Activated CD4-positive, alpha-beta memory T cell treated with anti-CD3 and anti-CD28 coated beads, Interleukin-2, amount 10 ng/mL, durations not matched to agents 7 days and 5 days (primary cell): ENCODE measurements at regions of chr7 and their contacts with region 1.

Region 1: GRCh38 chr7:103344453-103345149 is at the start of gene DNAJC2:
- DNase-seq: peak; percentile 87
- H3K4me3 Mint-ChIP-seq: peak within 1 kb of the TSS; percentile 100
- H3K27ac Mint-ChIP-seq: peak within 1 kb of the TSS; percentile 98
- H3K4me1 Mint-ChIP-seq: peaks cover 62% of the 10 kb centered on the region
- H3K27me3 Mint-ChIP-seq: no peaks in the 10 kb centered on the region
- total RNA-seq, gene DNAJC2: 24.8 to 26.2 TPM

Region 2: DNA sequence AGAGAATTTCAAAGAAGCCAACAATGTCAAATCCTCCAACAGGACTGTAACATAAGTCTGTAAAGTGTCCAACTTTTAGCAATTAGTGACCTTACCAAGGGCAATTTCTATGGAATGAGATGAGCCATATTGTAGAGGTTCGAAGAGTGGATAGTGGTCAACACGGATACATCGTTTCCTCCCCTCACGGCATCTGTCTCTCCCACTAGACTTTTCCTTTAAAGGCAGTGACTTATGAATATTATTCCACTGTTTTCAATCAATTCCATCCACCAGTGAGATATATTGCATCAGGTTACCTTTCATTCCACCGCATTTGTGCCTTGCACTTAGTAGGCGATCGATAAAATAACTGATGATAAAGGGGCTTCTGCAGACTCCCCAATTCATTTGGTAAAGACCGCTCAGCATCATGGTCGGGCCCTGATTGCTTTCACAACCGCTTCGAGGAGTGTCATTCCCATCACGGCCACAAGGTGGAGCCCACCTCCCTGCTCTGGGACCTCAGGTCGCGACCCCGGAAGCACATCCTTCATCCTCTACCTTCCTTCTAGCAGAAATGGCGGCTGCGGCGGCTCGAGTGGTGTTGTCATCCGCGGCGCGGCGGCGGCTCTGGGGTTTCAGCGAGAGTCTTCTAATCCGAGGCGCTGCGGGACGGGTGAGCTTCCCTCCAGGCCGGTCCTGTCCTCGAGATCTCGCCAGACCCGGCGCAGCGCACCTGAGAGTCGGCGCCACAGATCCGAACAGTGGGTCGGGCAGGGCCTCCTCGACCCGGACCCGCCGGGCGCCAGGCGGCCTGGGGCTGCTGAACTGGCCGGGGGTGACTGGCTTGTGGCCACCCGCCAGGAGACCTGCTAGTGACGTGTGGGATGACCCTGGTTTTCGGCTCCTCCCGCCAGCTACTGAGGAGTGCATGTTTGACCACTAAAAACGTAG is 47.4 kb before region 1 on chr7 and contains the start of gene PMPCB:
- CTCF ChIA-PET with region 1: interaction called, 3 read pairs
- POLR2A ChIA-PET with region 1: interaction called, 12 read pairs
- DNase-seq: peak; percentile 96
- H3K4me3 Mint-ChIP-seq: peak within 1 kb of the TSS; percentile 92
- H3K27ac Mint-ChIP-seq: peak within 1 kb of the TSS; percentile 86
- H3K4me1 Mint-ChIP-seq: peaks cover 43% of the 10 kb centered on the region
- H3K27me3 Mint-ChIP-seq: peaks cover 7% of the 10 kb centered on the region
- total RNA-seq, gene PMPCB: 63.9 TPM

Region 3: GRCh38 chr7:103307503-103308231 is 36.9 kb before region 1 on chr7:
- CTCF ChIA-PET with region 1: no interaction called
- POLR2A ChIA-PET with region 1: interaction called, 11 read pairs
- DNase-seq: no peak
- H3K4me3 Mint-ChIP-seq: no peak overlapping the region
- H3K27ac Mint-ChIP-seq: no peak overlapping the region
- H3K4me1 Mint-ChIP-seq: peaks cover 21% of the 10 kb centered on the region
- H3K27me3 Mint-ChIP-seq: no peaks in the 10 kb centered on the region

Region 4: GRCh38 chr7:103392018-103392417 is 47.4 kb after region 1 on chr7:
- CTCF ChIA-PET with region 1: no interaction called
- POLR2A ChIA-PET with region 1: no interaction called
- DNase-seq: no peak
- H3K4me3 Mint-ChIP-seq: no peak overlapping the region
- H3K27ac Mint-ChIP-seq: no peak overlapping the region
- H3K4me1 Mint-ChIP-seq: no peaks in the 10 kb centered on the region
- H3K27me3 Mint-ChIP-seq: peaks cover 11% of the 10 kb centered on the region